ENCODE measurements at regions of chr9 and their contacts with region 1.

Region 1: GRCh38 chr9:94681508-94681907 is 42.2 kb upstream of the FBP1 start:
- DNase-seq: peak; percentile 62
- H3K4me3 ChIP-seq: no peak overlapping the region
- H3K27ac ChIP-seq: no peak overlapping the region
- H3K27me3 ChIP-seq: no peaks in the 10 kb centered on the region
- CTCF ChIP-seq: peak; percentile 78

Region 2: DNA sequence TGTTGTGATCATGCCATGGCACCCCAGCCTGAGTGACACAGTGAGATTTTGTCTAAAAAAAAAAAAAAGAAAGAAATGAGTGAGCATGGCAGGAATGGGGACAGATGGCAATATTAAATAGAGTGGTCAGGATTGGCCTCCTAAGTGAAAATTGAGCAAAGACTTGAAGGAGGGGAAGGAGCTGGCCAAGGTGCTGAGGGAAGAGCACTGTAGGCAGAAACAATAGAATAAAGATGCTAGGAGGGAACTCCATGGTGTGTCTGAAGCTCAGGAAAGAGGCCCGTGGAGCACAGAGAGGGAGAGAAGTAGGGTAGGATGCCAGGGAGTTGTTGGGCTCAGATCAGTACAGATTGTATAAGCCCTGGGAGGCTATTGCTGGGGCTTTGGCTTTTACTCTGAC is 191.0 kb before region 1 on chr9:
- CTCF ChIA-PET with region 1: no interaction called
- POLR2A ChIA-PET with region 1: no interaction called
- DNase-seq: no peak
- H3K4me3 ChIP-seq: no peak overlapping the region
- H3K27ac ChIP-seq: no peak overlapping the region
- H3K27me3 ChIP-seq: no peaks in the 10 kb centered on the region
- CTCF ChIP-seq: no peak

Region 3: DNA sequence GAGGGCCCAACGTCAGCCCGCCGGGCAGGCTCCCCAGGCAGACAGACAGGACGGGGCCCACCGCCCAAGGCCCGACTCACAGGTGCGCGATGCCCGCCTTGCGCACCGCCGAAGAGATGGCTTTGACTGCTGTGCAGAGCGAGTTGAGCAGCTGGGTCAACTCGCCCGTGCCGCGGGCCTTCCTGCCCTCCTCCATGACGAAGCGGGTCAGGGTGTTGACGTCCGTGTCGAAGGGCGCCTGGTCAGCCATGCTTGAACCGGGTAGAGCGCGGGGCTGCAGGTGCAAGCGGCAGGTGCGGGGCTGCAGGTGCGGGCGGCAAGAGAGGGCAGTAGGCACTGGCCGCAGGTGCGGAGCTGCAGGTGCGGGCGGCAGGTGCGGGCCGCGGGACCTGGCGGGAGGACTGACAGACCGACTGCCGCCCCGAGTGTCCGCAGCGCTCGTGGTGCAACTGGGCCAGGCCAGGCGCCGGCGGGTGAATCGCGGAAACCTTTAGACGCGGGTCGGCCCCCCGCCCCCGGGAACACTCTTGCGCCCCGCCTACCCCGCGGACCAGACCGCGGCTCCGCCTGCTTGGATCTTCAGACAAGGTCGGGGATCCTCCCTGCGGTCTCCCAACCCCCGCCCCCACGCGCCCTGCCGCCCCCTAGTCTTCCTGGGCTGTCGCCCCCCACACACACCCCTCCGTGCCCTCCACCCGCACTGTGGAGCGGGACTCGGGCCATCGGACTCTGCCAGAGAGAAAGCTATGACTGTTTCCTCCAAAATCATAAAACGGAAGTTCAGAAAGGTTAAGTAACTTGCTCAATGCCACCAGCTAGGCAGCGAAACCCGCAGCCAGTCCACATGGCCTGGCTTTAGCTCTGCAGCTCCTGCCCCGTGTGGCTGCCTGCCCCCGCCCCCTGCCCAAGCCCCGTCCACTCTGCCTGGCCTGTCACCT is 42.2 kb before region 1 on chr9 and contains the start of gene FBP1:
- CTCF ChIA-PET with region 1: no interaction called
- POLR2A ChIA-PET with region 1: no interaction called
- DNase-seq: no peak
- H3K4me3 ChIP-seq: peak within 1 kb of the TSS; percentile 46
- H3K27ac ChIP-seq: no peak within 1 kb of the TSS
- H3K27me3 ChIP-seq: peaks cover 48% of the 10 kb centered on the region
- CTCF ChIP-seq: no peak
- polyA plus RNA-seq, gene FBP1: not detected in 2 replicates

Region 4: DNA sequence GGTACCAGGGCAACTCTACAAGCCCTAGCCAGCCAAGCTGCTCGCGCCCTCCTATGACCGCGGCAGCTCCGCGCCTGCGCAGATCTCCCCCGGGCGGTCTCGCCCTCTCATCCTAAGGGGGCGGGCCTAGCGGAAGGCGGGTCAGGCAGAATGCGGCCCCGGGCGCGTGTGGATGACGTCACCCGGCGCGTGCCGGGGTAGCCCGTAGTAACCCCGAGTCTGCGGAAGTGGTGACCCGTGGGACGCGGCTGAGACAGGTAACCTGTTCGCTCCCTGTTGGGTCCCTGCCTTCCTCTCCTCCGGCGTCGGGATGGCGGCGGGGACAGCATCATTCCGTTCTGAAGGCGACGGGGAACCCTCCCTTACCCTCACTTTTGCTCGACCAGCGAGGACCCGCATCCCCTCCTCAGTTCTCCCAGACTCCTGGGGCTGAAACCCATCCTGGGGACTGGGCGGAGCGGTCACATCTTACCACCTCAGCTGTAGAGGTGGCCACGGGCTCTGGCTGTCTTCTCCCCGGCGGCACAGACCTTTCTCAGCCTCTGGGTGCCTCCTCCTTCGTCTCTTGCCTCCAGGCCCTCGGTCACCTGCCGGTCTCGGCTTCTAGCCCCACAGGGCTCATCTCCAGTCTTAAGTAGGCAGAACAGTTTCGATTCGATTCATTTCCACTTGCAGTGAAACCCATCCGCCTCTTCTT is 45.1 kb after region 1 on chr9 and contains the start of gene AOPEP:
- CTCF ChIA-PET with region 1: interaction called, 12 read pairs
- POLR2A ChIA-PET with region 1: no interaction called
- DNase-seq: peak; percentile 86
- H3K4me3 ChIP-seq: peak within 1 kb of the TSS; percentile 98
- H3K27ac ChIP-seq: peak within 1 kb of the TSS; percentile 74
- H3K27me3 ChIP-seq: no peaks in the 10 kb centered on the region
- CTCF ChIP-seq: no peak
- polyA plus RNA-seq, gene AOPEP: 36.6 and 40.0 TPM in 2 replicates

Region 5: DNA sequence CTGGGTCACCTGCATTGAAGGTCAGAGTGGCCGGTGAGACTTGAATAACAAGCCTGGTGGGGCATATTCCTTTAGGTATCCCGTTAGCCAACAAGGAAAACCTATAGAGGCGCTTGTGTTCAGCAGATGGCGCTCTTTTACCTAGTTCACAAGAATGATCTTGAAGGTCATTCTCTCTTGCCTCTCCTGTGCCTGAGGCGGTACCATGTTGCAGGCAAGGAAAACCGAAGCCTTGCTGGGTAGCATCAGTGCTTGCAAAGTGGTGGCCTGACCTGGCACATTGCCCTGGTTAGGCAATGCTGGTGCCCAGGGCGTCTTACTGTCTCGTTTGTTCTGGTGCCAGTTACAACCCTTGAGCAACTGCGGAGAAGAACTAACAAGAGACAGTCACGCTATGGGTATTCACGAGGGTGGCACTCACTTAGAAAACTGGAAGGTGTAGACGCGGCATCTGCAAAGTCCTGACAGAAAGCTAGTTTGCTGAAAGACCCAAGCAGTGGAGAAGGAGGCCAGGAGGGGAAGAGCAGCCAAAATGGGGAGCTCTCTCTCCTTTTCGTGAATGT is 101.7 kb after region 1 on chr9:
- CTCF ChIA-PET with region 1: interaction called, 19 read pairs
- POLR2A ChIA-PET with region 1: no interaction called
- DNase-seq: peak; percentile 58
- H3K4me3 ChIP-seq: no peak overlapping the region
- H3K27ac ChIP-seq: peak overlapping the region; percentile 65
- H3K27me3 ChIP-seq: no peaks in the 10 kb centered on the region
- CTCF ChIP-seq: peak; percentile 77

Region 6: GRCh38 chr9:95012035-95012708 is 330.7 kb after region 1 on chr9:
- CTCF ChIA-PET with region 1: interaction called, 11 read pairs
- POLR2A ChIA-PET with region 1: no interaction called
- DNase-seq: no peak
- H3K4me3 ChIP-seq: no peak overlapping the region
- H3K27ac ChIP-seq: no peak overlapping the region
- H3K27me3 ChIP-seq: no peaks in the 10 kb centered on the region
- CTCF ChIP-seq: no peak

Region 7: GRCh38 chr9:95107976-95108375 is 426.5 kb after region 1 on chr9:
- CTCF ChIA-PET with region 1: interaction called, 15 read pairs
- POLR2A ChIA-PET with region 1: no interaction called
- DNase-seq: no peak
- H3K4me3 ChIP-seq: no peak overlapping the region
- H3K27ac ChIP-seq: no peak overlapping the region
- H3K27me3 ChIP-seq: no peaks in the 10 kb centered on the region
- CTCF ChIP-seq: no peak

Region 8: DNA sequence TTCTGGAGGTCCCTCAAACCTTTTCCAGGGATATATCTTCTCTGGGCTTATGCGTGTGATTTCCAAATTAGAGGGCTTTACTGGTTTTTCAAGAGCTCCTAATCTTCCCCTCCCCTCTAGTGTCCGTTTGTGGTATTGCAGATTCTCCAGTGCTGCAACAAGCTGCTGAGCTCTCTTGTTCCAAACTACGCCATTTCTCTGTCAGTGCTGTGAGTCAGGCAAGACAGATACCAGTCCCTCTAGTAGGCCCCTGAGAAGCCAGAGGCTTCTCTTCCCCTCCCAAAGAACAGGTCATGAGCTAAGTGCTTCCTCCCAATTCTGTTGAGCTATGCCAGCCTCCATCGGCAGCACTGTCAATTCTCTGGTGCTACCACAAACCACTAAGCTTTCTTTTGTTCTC is 486.5 kb after region 1 on chr9:
- CTCF ChIA-PET with region 1: interaction called, 31 read pairs
- POLR2A ChIA-PET with region 1: no interaction called
- DNase-seq: peak; percentile 89
- H3K4me3 ChIP-seq: no peak overlapping the region
- H3K27ac ChIP-seq: peak overlapping the region; percentile 57
- H3K27me3 ChIP-seq: no peaks in the 10 kb centered on the region
- CTCF ChIP-seq: peak; percentile 96

Measured in AG04450 (cell line).